Endothelial cell of umbilical vein (primary cell): ENCODE measurements at regions of chr11 and their contacts with region 1.

Region 1: GRCh38 chr11:575996-576768 is at the start of gene PHRF1:
- DNase-seq: peak; percentile 92
- H3K4me3 ChIP-seq: peak within 1 kb of the TSS; percentile 79 to 98 (median 79)
- H3K27ac ChIP-seq: peak within 1 kb of the TSS; percentile 98
- H3K4me1 ChIP-seq: peaks cover 14% of the 10 kb centered on the region
- H3K27me3 ChIP-seq: peaks cover 8 to 10% of the 10 kb centered on the region in 2 experiments
- CTCF ChIP-seq: no peak
- POLR2A ChIP-seq: peak; percentile 83
- total RNA-seq, gene PHRF1: 38.8 and 39.4 TPM in 2 replicates

Region 2: GRCh38 chr11:613369-614268 is 37.4 kb after region 1 on chr11:
- CTCF ChIA-PET with region 1: interaction called, 3 read pairs
- POLR2A ChIA-PET with region 1: no interaction called
- dilution Hi-C with region 1: no loop called
- intact Hi-C with region 1: loop called (anchors 5 kb)
- DNase-seq: peak; percentile 48
- H3K4me3 ChIP-seq: no peak overlapping the region
- H3K27ac ChIP-seq: no peak overlapping the region
- H3K4me1 ChIP-seq: peaks cover 6% of the 10 kb centered on the region
- H3K27me3 ChIP-seq: no peaks in the 10 kb centered on the region
- CTCF ChIP-seq: no peak
- POLR2A ChIP-seq: no peak